Activated B cell treated with CpG ODN at 0.5 μM for 24 hours (primary cell): ENCODE measurements at regions of chr15 and their contacts with region 1.

Region 1: DNA sequence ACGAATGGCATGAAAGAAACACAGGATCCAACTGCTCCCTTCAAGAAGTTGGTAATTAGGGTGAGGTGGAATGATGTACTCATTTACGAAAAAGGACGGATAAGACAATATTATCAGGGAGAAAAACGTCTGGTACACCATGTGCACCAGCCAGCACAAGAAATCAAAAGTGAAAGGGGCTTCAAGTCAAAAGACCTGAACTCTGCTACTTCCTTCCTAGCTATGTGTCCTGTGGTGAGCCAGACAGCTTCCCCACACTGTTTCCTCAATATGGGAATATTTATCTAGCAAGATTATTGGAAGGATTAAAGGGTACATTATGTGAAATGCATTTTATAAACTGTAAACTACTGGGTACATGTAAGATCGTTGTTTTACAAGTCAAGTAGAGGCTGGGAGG is 33.9 kb downstream of the RAB27A start:
- DNase-seq: no peak
- ATAC-seq: peak; percentile 47
- H3K4me3 Mint-ChIP-seq: peak overlapping the region; percentile 74
- H3K27ac Mint-ChIP-seq: peak overlapping the region; percentile 86
- H3K4me1 Mint-ChIP-seq: peaks cover 64% of the 10 kb centered on the region
- H3K27me3 Mint-ChIP-seq: no peaks in the 10 kb centered on the region
- CTCF ChIP-seq: no peak

Region 2: GRCh38 chr15:55241891-55242290 is 13.8 kb before region 1 on chr15:
- CTCF ChIA-PET with region 1: no interaction called
- POLR2A ChIA-PET with region 1: interaction called, 5 read pairs
- intact Hi-C with region 1: loop called (anchors 2 kb)
- DNase-seq: no peak
- ATAC-seq: no peak
- H3K4me3 Mint-ChIP-seq: no peak overlapping the region
- H3K27ac Mint-ChIP-seq: no peak overlapping the region
- H3K4me1 Mint-ChIP-seq: peaks cover 2% of the 10 kb centered on the region
- H3K27me3 Mint-ChIP-seq: no peaks in the 10 kb centered on the region
- CTCF ChIP-seq: no peak

Region 3: GRCh38 chr15:55267401-55268175 is 11.9 kb after region 1 on chr15:
- CTCF ChIA-PET with region 1: interaction called, 3 read pairs
- POLR2A ChIA-PET with region 1: interaction called, 7 read pairs
- intact Hi-C with region 1: loop called (anchors 1 kb)
- DNase-seq: peak; percentile 39
- ATAC-seq: peak; percentile 98
- H3K4me3 Mint-ChIP-seq: peak overlapping the region; percentile 82
- H3K27ac Mint-ChIP-seq: peak overlapping the region; percentile 96
- H3K4me1 Mint-ChIP-seq: peaks cover 26% of the 10 kb centered on the region
- H3K27me3 Mint-ChIP-seq: no peaks in the 10 kb centered on the region
- CTCF ChIP-seq: no peak